Activated naive CD4-positive, alpha-beta T cell treated with anti-CD3 and anti-CD28 coated beads for 36 hours (primary cell): ENCODE measurements at regions of chr12 and their contacts with region 1.

Region 1: DNA sequence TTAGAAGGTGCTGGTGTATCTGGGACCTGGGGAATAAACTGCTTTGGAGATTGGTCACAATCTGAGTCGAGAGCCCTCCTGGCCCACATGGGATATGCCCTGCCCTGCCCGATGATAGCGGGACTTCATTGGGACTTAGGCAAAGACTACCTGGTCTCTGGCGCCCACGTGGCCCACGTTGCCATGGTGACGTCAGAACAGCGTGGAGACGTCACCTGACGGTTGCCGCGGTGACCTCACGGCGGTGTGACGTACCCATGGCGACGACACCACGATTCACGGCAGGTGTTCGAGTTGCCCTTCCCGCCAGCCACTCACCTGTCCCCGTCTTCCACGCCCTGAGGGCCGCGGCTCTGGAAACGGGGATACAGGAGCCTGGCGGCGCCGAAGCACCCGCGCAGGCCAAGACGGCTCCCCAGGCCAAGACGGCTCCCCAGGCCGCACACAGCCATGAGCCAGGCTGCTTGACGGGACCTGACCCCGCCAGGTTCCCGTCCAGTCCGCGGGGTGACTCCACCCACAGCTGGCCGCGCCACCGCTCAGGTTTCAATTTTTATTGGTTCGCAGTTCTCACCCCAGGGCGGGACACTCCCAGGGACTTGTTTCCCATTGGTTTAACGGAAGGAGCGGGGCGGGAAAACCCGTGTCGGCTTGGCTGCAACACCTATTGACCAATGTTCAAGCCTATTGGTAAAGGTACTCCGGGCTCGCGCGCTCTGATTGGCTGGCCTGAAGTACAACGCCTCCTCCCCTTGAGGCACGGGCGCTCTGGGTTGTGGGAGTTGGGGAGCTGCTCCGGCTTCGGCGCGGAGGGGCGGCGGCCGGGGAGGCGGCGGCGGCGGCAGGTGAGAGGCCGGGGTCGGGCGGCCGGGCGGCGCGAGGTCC is at the starts of genes MMAB and MVK:
- DNase-seq: peak; percentile 100
- H3K4me3 Mint-ChIP-seq: peak within 1 kb of the TSS; percentile 92
- H3K27ac Mint-ChIP-seq: peak within 1 kb of the TSS; percentile 90
- H3K4me1 Mint-ChIP-seq: peaks cover 23% of the 10 kb centered on the region
- H3K27me3 Mint-ChIP-seq: no peaks in the 10 kb centered on the region
- total RNA-seq, gene MMAB: 43.8 to 44.9 TPM
- total RNA-seq, gene MVK: 19.8 to 20.2 TPM

Region 2: GRCh38 chr12:108691175-108691997 is 881.9 kb before region 1 on chr12:
- CTCF ChIA-PET with region 1: no interaction called
- intact Hi-C with region 1: loop called (anchors 1 kb)
- DNase-seq: peak; percentile 92
- H3K4me3 Mint-ChIP-seq: peak overlapping the region; percentile 55
- H3K27ac Mint-ChIP-seq: peak overlapping the region; percentile 80
- H3K4me1 Mint-ChIP-seq: peaks cover 77% of the 10 kb centered on the region
- H3K27me3 Mint-ChIP-seq: peaks cover 2% of the 10 kb centered on the region

Region 3: GRCh38 chr12:109052414-109053323 is 520.6 kb before region 1 on chr12 and contains the start of gene USP30:
- CTCF ChIA-PET with region 1: no interaction called
- intact Hi-C with region 1: loop called (anchors 1 kb)
- DNase-seq: peak; percentile 87
- H3K4me3 Mint-ChIP-seq: peak within 1 kb of the TSS; percentile 84
- H3K27ac Mint-ChIP-seq: peak within 1 kb of the TSS; percentile 96
- H3K4me1 Mint-ChIP-seq: peaks cover 8% of the 10 kb centered on the region
- H3K27me3 Mint-ChIP-seq: no peaks in the 10 kb centered on the region
- total RNA-seq, gene USP30: 11.0 to 11.5 TPM

Region 4: DNA sequence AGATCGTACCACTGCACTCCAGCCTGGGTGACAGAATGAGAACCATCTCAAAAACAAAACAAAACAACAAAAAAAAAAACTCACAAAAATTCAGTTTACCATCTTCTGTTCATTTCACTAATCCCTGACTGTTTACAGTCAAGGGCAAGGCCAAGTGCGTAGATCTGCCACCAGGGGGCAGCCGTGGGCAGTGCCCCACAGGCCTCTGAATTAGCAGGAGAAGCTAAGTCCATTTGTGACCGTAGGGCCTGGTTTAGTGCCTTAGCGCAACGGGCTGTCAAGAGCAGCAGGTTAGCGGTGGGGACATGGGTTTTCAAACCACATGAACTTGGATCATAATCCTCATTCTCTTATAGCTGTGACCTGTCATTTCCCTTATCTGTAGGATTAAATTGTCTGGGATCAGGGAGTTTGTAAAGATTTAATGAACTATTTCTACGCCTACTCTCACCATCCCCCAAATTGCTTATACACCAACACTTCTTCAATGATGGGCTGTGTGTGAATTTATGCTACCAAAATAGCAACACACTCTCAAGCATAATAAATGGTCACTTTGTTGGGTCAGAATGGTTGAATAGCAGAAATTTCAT is 145.1 kb before region 1 on chr12:
- CTCF ChIA-PET with region 1: interaction called, 4 read pairs
- intact Hi-C with region 1: loop called (anchors 10 kb)
- DNase-seq: peak; percentile 82
- H3K4me3 Mint-ChIP-seq: no peak overlapping the region
- H3K27ac Mint-ChIP-seq: no peak overlapping the region
- H3K4me1 Mint-ChIP-seq: peaks cover 6% of the 10 kb centered on the region
- H3K27me3 Mint-ChIP-seq: no peaks in the 10 kb centered on the region

Region 5: DNA sequence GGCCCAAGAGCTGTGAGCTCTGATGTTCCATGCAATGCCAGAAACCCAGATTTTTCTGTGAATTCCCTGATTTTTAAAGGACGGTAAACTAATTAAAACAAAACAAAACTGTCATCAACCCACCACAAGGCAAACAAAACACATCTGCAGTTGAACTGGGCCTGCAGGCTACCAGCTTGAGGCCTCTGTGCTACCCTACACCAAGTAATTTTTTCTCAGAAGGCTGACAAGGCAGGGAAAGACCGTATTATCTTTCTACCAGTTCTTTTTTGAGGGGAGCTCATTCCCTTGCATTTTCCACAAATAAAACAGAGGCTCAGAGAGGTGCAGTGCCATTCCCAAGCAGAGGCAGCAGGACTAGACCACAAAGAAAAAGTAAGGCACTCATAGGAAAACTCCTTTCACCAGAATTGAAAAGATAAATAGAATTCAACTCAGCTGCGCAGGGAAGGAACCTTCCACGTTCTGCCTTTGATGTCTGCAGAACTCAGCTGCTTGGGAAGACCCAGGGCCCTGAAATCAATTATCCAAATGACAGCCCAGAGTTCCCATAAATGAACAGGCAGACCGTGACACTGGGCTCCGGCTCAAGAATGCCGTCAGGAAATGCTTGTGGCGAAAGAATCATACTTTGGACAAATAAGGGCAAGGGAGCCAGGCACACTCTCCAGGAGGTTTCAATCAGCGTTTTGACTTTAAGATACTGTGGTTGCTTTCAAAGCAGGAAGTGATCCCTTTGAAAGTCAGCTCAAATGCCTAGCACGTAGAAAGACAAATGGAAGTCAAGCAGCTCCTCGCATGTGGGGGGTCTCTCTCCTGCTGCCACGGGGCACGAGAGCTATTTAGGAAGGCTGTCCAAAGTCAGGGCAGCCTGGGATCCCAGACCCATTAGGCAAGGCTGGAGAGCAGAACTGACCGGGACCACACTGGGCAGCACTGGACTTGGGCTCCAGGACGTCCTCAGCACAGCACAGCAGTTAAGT is 110.3 kb before region 1 on chr12:
- CTCF ChIA-PET with region 1: no interaction called
- intact Hi-C with region 1: no loop called
- DNase-seq: no peak
- H3K4me3 Mint-ChIP-seq: no peak overlapping the region
- H3K27ac Mint-ChIP-seq: no peak overlapping the region
- H3K4me1 Mint-ChIP-seq: peaks cover 37% of the 10 kb centered on the region
- H3K27me3 Mint-ChIP-seq: no peaks in the 10 kb centered on the region

Region 6: DNA sequence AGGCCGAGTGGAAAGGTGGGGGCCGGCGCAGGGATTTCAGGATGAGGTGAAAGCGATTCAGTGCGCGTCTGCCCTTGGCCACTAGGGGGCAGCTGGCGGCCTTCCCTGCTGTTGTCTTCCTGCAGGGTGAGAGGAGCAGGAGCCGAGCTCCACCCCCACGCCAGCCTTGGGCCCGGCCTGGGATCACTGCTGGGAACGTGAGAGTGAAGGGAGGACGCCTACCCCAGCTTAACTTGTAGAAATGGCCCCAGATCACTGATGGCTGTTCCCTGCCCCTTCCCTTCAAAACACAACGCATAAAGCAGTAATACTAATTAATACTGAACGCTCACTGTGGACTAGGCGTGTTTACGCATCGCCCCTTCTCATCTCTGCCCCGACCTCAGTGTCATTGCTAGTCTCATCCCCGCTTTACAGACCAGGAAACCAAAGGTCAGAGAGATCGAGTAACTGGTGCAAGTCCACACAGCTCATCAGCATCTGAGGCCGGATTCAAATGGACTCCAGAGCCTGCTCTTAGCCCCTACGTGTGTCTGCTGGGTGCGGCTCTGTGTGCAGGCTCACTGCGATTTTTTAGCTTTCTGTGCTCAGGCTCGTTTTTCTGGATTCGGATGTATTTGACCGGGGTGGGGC is 24.6 kb after region 1 on chr12:
- CTCF ChIA-PET with region 1: interaction called, 32 read pairs
- intact Hi-C with region 1: loop called (anchors 1 kb)
- DNase-seq: peak; percentile 80
- H3K4me3 Mint-ChIP-seq: no peak overlapping the region
- H3K27ac Mint-ChIP-seq: no peak overlapping the region
- H3K4me1 Mint-ChIP-seq: peaks cover 35% of the 10 kb centered on the region
- H3K27me3 Mint-ChIP-seq: no peaks in the 10 kb centered on the region

Region 7: GRCh38 chr12:109880016-109880931 is 307.0 kb after region 1 on chr12 and contains the start of gene GLTP:
- CTCF ChIA-PET with region 1: no interaction called
- intact Hi-C with region 1: loop called (anchors 5 kb)
- DNase-seq: peak; percentile 86
- H3K4me3 Mint-ChIP-seq: peak within 1 kb of the TSS; percentile 93
- H3K27ac Mint-ChIP-seq: peak within 1 kb of the TSS; percentile 66
- H3K4me1 Mint-ChIP-seq: peaks cover 42% of the 10 kb centered on the region
- H3K27me3 Mint-ChIP-seq: no peaks in the 10 kb centered on the region
- total RNA-seq, gene GLTP: 18.1 to 19.9 TPM